AG04450 (cell line): ENCODE measurements at regions of chr1 and their contacts with region 1.

Region 1: GRCh38 chr1:46173361-46173856 is 1.5 kb upstream of the TSPAN1 start:
- DNase-seq: no peak
- H3K4me3 ChIP-seq: no peak overlapping the region
- H3K27ac ChIP-seq: no peak overlapping the region
- H3K27me3 ChIP-seq: peaks cover 14% of the 10 kb centered on the region
- CTCF ChIP-seq: no peak

Region 2: GRCh38 chr1:46152016-46152415 is 21.4 kb before region 1 on chr1:
- CTCF ChIA-PET with region 1: no interaction called
- POLR2A ChIA-PET with region 1: interaction called, 10 read pairs
- DNase-seq: peak; percentile 61
- H3K4me3 ChIP-seq: no peak overlapping the region
- H3K27ac ChIP-seq: no peak overlapping the region
- H3K27me3 ChIP-seq: peaks cover under 1% of the 10 kb centered on the region
- CTCF ChIP-seq: no peak